ENCODE measurements at regions of chr22 and their contacts with region 1.

Region 1: DNA sequence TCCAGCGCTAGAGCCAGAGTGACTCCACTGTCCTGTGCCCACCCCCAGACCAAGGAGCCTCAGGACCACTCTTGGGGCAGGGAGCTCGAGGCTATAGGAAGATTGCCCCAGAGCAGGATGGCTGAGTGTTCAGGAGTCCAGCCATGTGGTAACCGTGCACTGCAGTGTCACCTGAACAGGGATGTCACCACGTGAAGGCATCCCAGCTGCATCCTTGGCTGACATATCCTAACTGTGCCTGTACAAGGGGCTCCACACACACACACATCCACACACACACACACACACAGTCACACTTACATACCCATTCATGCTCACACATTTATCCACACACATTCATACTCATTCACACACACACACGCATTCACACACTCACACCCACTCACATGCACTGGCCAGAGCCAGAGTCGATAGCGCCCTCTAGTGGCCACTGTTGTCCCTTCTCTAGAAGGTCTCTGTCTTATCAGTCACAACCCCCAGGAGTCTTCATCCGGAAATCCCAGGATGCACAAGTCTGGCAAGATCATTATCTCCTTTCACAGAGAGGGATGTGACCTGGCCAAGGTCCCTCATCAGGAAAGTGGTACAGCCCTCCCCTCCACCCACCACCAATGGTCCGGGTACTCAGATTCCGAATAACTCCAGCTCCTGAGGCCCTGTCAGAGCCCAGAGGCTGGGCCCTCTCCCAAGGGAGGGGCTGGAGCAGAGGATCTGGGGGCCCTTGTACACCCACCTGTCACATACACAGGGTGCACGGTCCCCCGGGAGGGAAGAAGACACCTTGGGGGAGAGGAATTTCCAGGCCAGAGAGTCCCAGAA is 55.1 kb downstream of the IGLL5 start:
- DNase-seq: peak; percentile 80
- H3K4me3 ChIP-seq: no peak overlapping the region; a peak in 1 of 4 replicates
- H3K27ac ChIP-seq: no peak overlapping the region
- H3K4me1 ChIP-seq: peaks cover 0 to 8% of the 10 kb centered on the region in 2 experiments; a peak in 1 of 4 replicates
- H3K27me3 ChIP-seq: no peaks in the 10 kb centered on the region
- CTCF ChIP-seq: peak; percentile 74
- EP300 ChIP-seq: no peak
- RAD21 ChIP-seq: peak; percentile 60

Region 2: DNA sequence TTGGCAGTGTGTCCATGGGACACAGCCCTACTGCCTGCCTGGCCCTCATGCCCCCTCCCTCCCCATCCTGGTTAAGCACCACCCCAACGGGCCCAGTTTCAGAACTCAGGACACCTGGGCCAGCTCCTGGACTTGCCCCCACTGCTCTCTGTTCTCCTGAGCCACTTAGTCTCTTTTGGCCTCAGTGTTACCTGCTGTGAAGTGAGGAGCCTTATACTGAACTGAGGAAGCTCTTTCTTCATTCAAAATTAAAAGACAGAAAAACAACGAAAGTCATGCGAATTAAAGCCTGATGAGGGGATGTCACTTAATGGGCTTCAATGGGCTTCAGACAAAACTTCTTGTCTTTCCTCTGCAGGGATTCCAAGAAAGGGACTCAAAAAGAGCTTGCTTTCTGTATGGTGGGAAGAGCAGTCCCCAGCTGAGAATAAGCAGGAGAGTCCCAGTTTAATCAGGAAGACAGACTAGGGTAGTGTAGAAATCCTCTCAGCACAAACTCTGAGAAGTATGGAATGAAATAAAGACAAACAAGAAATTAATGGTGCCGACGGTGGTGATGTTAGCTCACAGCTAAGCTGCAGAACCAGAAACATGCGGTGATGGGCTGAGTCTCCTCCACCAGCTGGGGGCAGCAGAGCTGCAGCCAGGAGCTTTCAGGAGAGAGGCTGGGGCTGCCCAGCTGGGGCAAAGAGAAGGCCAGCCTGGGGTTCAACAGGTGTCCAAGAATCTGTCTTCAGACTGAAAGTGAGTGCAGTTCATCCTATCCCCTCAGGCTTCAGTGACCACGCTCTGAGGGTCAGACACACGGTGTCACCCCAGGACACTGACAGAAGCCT is 197.3 kb before region 1 on chr22:
- CTCF ChIA-PET with region 1: interaction called, 11 read pairs
- POLR2A ChIA-PET with region 1: no interaction called
- DNase-seq: peak; percentile 28
- H3K4me3 ChIP-seq: no peak overlapping the region
- H3K27ac ChIP-seq: no peak overlapping the region
- H3K4me1 ChIP-seq: no peaks in the 10 kb centered on the region
- H3K27me3 ChIP-seq: no peaks in the 10 kb centered on the region; the same call in 1 of the 2 replicates
- CTCF ChIP-seq: peak; percentile 56
- EP300 ChIP-seq: no peak
- RAD21 ChIP-seq: peak; percentile 52

Region 3: DNA sequence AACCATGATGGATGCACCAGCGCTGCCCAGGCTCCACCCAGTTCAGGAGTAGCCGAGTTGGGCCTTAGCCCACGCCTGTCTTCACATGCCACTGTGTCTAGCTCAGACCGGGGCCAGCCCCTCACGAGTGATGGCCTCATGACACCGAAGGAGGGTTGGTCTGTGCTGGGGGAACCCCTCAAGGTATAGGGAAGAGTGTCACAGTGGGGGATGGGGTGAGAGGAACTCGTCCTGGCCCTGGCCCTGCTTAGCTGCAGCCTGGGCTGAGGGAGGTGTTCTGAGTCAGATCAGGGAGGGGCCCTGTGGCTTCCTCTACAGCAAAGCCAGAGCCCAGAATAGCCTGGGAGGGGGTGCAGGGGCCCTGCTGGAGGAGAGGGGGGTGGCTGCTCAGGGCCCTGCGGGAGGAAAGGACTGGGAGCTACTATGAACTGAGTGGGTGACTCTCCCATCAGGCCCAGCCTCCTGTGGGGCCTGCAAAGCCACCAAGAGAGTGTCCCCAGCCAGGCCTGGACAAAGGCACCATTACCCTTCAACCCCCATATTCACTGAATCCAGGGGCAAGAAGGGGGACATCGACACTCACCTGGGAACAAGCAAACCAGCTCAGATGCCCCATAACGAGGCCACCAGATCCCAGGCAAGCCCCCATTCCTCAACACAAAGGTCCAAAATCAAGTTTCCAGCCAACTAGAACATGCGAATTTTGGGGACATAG is 13.9 kb before region 1 on chr22:
- CTCF ChIA-PET with region 1: interaction called, 36 read pairs
- POLR2A ChIA-PET with region 1: no interaction called
- DNase-seq: no peak
- H3K4me3 ChIP-seq: no peak overlapping the region
- H3K27ac ChIP-seq: no peak overlapping the region
- H3K4me1 ChIP-seq: peaks cover 0 to 4% of the 10 kb centered on the region in 2 experiments; a peak in 1 of 4 replicates
- H3K27me3 ChIP-seq: no peaks in the 10 kb centered on the region
- CTCF ChIP-seq: no peak
- EP300 ChIP-seq: no peak
- RAD21 ChIP-seq: no peak